Activated B cell treated with CpG ODN at 0.5 μM for 24 hours (primary cell): ENCODE measurements at regions of chr19 and their contacts with region 1.

Region 1: DNA sequence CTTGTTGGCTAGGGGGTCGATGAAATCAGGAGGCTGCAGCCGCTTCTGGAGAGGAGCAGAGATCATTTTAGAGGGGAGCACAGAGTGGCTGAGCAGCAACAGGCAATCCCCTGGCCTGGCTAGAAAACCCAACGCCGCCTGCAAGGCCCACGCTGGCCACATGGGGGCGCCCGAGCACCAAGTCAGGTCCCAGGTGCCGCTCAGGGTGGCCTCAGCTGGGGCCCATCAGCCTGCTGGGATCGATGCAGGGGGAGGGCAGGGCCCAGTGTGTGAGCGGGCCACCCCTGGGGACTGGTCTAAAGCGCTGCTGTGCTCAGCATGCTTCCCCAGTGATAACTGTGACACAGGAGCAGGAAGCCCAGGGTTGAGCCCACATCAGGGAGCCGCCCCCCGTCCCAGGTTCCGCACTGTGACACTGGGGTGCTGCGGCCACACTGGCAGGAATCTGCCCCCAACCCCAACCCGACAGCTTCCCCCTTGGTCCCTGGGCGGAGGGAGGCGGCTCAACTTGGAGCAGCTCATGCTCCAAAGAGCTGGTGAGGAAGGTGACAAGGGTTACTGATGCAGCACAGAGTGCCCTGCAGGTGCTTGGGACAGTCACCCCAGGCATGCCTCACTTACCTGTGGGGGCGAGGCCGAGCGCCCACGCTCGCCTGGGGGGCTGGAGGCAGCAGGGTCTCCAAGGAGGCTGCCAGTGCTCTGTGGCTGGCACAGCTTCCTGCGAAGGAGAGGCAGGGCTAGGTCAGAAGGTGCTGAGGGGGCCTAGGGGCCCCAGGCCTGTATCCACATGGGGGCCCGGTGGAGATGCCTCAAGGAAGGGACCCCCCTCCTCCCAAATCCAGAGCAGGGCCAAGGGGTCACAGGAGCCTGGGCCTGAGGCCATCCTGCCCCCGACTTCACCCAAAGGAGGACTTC is 13.3 kb upstream of the ISYNA1 start:
- DNase-seq: peak; percentile 90
- ATAC-seq: peak; percentile 97
- H3K4me3 Mint-ChIP-seq: no peak overlapping the region
- H3K27ac Mint-ChIP-seq: no peak overlapping the region
- H3K4me1 Mint-ChIP-seq: peaks cover 5% of the 10 kb centered on the region
- H3K27me3 Mint-ChIP-seq: no peaks in the 10 kb centered on the region
- CTCF ChIP-seq: peak; percentile 45

Region 2: GRCh38 chr19:18436671-18437490 is 14.3 kb before region 1 on chr19:
- CTCF ChIA-PET with region 1: interaction called, 3 read pairs
- POLR2A ChIA-PET with region 1: interaction called, 3 read pairs
- intact Hi-C with region 1: loop called (anchors 2 kb)
- DNase-seq: peak; percentile 71
- ATAC-seq: peak; percentile 72
- H3K4me3 Mint-ChIP-seq: peak overlapping the region; percentile 78
- H3K27ac Mint-ChIP-seq: no peak overlapping the region
- H3K4me1 Mint-ChIP-seq: peaks cover 38% of the 10 kb centered on the region
- H3K27me3 Mint-ChIP-seq: no peaks in the 10 kb centered on the region
- CTCF ChIP-seq: no peak

Region 3: GRCh38 chr19:18675779-18676178 is 224.6 kb after region 1 on chr19:
- CTCF ChIA-PET with region 1: no interaction called
- POLR2A ChIA-PET with region 1: no interaction called
- intact Hi-C with region 1: loop called (anchors 10 kb)
- DNase-seq: no peak
- ATAC-seq: no peak
- H3K4me3 Mint-ChIP-seq: no peak overlapping the region
- H3K27ac Mint-ChIP-seq: no peak overlapping the region
- H3K4me1 Mint-ChIP-seq: no peaks in the 10 kb centered on the region
- H3K27me3 Mint-ChIP-seq: peaks cover 2% of the 10 kb centered on the region
- CTCF ChIP-seq: no peak

Region 4: DNA sequence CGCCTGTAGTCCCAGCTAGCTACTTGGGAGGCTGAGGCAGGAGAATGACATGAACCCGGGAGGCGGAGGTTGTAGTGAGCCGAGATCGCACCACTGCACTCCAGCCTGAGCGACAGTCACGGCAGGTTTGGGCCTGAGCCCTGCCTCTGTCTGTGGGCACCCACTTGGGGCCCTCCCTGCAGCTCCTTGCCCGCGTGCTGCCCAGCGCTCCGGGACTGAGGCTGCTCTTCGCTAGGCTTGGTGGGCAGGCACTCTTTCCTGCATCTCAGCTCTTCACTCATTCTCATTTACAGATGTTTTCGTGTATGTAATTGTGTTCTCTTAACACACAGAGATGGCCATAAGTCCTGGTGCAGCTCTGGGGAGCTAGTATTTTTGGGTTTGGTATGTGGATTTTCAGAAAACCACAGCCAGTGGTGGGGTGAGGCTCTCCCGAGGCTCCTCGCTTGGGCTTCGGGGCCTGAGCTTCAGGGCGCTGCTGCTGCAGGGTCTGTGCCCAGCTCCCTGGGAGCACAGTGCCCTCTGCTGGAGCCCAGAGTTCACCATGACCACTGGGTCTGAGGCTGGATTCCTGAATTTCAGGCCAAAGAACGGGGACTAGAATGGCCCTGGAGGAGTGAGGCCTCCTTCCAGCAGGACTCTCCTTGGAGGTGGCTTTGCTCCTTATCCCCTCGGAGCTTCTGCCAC is 395.8 kb after region 1 on chr19:
- CTCF ChIA-PET with region 1: interaction called, 15 read pairs
- POLR2A ChIA-PET with region 1: no interaction called
- intact Hi-C with region 1: loop called (anchors 1 kb)
- DNase-seq: peak; percentile 56
- ATAC-seq: peak; percentile 77
- H3K4me3 Mint-ChIP-seq: no peak overlapping the region
- H3K27ac Mint-ChIP-seq: peak overlapping the region; percentile 46
- H3K4me1 Mint-ChIP-seq: peaks cover 75% of the 10 kb centered on the region
- H3K27me3 Mint-ChIP-seq: no peaks in the 10 kb centered on the region
- CTCF ChIP-seq: peak; percentile 35

Region 5: DNA sequence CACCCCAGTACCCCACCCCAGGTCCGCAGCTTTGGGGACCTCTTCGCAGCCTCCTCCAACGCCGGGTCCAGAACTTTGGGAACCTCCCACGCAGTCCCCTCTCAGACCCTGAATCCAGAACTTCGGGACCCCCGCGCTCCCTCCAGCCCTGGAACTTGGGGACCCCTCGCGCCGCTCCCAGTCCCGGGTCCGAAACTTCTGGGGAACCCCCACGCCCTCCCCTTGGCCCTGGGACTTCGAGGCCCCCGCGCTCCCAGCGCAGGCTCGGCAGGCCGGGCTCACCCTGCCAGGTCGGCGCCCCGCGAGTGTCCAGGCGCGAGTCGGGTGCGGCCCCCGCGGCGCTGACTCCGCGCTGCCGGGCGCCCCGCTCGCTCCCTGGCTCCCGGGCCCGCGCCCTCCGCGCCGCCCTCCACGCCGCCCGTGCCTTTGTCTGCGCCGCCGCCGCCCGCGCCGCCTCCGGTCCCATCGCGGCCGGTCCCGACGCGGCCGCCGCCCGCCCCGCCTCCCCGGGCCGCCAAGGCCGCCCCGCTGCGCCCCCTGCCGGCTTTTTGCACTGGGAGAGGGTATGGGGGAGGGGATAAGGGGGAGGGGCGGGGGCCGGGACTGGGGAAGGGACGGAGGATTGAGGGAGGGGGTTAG is 489.7 kb after region 1 on chr19 and contains the start of gene HOMER3:
- CTCF ChIA-PET with region 1: no interaction called
- POLR2A ChIA-PET with region 1: no interaction called
- intact Hi-C with region 1: loop called (anchors 1 kb)
- DNase-seq: peak; percentile 80
- ATAC-seq: peak; percentile 91
- H3K4me3 Mint-ChIP-seq: peak within 1 kb of the TSS; percentile 78
- H3K27ac Mint-ChIP-seq: no peak within 1 kb of the TSS
- H3K4me1 Mint-ChIP-seq: peaks cover 16% of the 10 kb centered on the region
- H3K27me3 Mint-ChIP-seq: peaks cover 9% of the 10 kb centered on the region
- CTCF ChIP-seq: no peak
- total RNA-seq, gene HOMER3: 1.9 and 2.3 TPM in 2 replicates

Region 6: DNA sequence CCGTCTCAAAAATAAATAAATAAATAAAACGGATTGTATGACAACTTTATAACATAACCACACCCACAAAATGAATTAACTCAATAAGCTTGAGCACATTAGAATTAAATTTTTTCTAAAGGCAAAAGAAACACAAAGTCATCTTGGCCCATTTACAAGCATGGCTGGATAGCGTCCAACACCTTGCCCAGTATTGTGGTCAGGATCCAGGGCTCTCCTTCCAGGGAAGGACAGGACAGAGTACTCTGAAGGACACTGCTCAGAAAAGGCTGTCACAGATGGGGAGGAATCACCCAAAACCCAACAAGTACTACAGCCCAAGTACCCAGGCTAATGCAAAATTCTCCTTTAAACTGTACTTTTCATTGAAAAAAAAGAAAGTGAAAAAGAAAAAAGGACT is 555.0 kb after region 1 on chr19:
- CTCF ChIA-PET with region 1: no interaction called
- POLR2A ChIA-PET with region 1: no interaction called
- intact Hi-C with region 1: no loop called
- DNase-seq: no peak
- ATAC-seq: no peak
- H3K4me3 Mint-ChIP-seq: no peak overlapping the region
- H3K27ac Mint-ChIP-seq: no peak overlapping the region
- H3K4me1 Mint-ChIP-seq: no peaks in the 10 kb centered on the region
- H3K27me3 Mint-ChIP-seq: no peaks in the 10 kb centered on the region
- CTCF ChIP-seq: no peak